ENCODE measurements at regions of chr9 and their contacts with region 1.

Region 1: DNA sequence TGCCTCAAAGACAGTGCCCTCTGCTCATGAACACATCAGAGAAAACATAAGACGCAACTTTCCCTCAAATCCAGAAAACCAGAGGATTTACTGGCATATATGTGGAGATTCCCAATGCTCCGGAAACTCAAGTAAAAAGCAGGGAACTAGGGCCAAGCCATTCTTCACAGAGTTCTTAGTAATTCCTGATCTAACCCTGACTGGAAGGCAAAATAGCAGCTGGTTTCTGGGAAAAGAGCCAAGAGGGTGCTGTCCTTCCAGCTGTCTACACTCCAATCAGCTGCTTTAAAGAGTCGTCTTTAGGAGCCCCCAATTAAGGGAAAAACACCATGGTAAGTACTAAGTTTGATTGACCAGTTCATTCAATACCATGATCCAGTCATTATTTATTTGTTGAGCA is 49.6 kb downstream of the GNA14 start:
- DNase-seq: no peak
- H3K4me3 ChIP-seq: no peak overlapping the region
- H3K27ac ChIP-seq: no peak overlapping the region
- H3K4me1 ChIP-seq: no peaks in the 10 kb centered on the region
- H3K27me3 ChIP-seq: no peaks in the 10 kb centered on the region
- CTCF ChIP-seq: no peak

Region 2: DNA sequence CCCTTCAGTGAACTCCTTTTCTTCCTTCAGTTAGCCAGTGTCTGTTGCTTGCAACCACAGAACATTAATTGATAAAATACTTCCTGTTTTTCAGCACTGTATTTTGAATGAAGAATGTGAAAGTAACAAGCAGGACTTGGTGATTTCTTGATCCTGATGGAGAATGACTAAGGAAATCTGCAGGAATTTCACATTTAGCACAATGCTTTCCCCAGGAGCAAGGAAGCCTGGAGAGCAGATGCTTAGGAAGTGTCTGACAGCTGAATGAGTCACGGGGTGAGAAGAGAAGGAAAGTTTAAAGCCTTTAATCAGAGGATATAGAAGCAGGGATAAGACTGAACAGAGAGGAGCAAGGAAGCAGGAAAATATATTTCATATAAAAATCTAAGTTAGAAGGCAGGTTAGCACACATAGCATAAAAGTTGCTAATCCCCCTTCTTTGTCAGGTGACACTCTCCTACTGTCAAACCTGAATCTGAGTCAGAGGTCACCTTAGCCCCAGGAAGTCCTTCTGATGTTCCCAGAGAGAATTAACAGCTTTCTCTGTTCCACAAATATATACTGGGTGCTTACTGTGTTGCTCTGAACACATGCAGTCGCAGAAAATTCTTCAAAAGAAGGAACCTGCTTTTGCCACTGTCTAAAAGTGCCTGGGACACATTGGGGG is 10.1 kb before region 1 on chr9:
- intact Hi-C with region 1: loop called (anchors 1 kb)
- DNase-seq: no peak
- H3K4me3 ChIP-seq: no peak overlapping the region
- H3K27ac ChIP-seq: no peak overlapping the region
- H3K4me1 ChIP-seq: no peaks in the 10 kb centered on the region
- H3K27me3 ChIP-seq: no peaks in the 10 kb centered on the region
- CTCF ChIP-seq: no peak